ENCODE measurements at regions of chr14 and their contacts with region 1.

Region 1: GRCh38 chr14:34484726-34485125 is 22.7 kb upstream of the SPTSSA start:
- DNase-seq: no peak
- ATAC-seq: no peak
- H3K4me3 ChIP-seq: no peak overlapping the region
- H3K27ac ChIP-seq: no peak overlapping the region
- H3K4me1 ChIP-seq: peaks cover 4% of the 10 kb centered on the region; the same call in 1 of the 3 replicates
- CTCF ChIP-seq: no peak
- EP300 ChIP-seq: no peak
- POLR2A ChIP-seq: no peak
- RAD21 ChIP-seq: no peak

Region 2: DNA sequence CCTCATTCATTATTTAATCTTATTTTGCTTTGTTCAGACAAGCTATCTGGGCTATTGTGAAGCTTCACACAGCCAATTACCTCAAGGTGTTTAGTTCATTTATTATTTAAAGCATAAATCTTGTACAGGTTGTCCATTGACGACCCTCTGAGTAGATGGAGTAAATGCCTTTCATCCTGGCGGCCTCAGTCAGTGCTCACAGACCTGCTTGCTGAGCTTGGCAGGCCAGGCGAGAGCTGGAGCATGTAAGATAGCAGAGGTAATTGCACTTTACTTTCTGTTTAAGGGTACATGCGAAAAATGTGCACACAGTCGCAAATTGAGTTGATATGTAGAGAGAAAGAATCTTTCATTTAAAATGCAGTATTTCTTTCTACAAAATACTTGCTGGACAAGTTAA is 1321.6 kb before region 1 on chr14:
- CTCF ChIA-PET with region 1: no interaction called
- POLR2A ChIA-PET with region 1: interaction called, 10 read pairs
- DNase-seq: no peak
- ATAC-seq: no peak
- H3K4me3 ChIP-seq: no peak overlapping the region
- H3K27ac ChIP-seq: no peak overlapping the region
- H3K4me1 ChIP-seq: no peaks in the 10 kb centered on the region
- CTCF ChIP-seq: no peak
- EP300 ChIP-seq: no peak
- POLR2A ChIP-seq: no peak
- RAD21 ChIP-seq: no peak